ENCODE measurements at regions of chr5 and their contacts with region 1.

Region 1: GRCh38 chr5:63401436-63402046 is 560.7 kb downstream of the HTR1A start:
- DNase-seq: peak; percentile 45
- H3K4me3 ChIP-seq: no peak overlapping the region
- H3K27ac ChIP-seq: no peak overlapping the region
- H3K4me1 ChIP-seq: no peaks in the 10 kb centered on the region
- H3K27me3 ChIP-seq: no peaks in the 10 kb centered on the region
- CTCF ChIP-seq: peak; percentile 86 to 89

Region 2: GRCh38 chr5:62680121-62680520 is 721.4 kb before region 1 on chr5:
- CTCF ChIA-PET with region 1: no interaction called
- dilution Hi-C with region 1: no loop called
- in situ Hi-C with region 1: no loop called
- intact Hi-C with region 1: no loop called
- DNase-seq: no peak
- H3K4me3 ChIP-seq: no peak overlapping the region
- H3K27ac ChIP-seq: no peak overlapping the region
- H3K4me1 ChIP-seq: no peaks in the 10 kb centered on the region
- H3K27me3 ChIP-seq: no peaks in the 10 kb centered on the region
- CTCF ChIP-seq: no peak

Region 3: GRCh38 chr5:63085561-63085960 is 316.0 kb before region 1 on chr5:
- CTCF ChIA-PET with region 1: no interaction called
- dilution Hi-C with region 1: no loop called
- in situ Hi-C with region 1: no loop called
- intact Hi-C with region 1: no loop called
- DNase-seq: no peak
- H3K4me3 ChIP-seq: no peak overlapping the region
- H3K27ac ChIP-seq: no peak overlapping the region
- H3K4me1 ChIP-seq: no peaks in the 10 kb centered on the region
- H3K27me3 ChIP-seq: no peaks in the 10 kb centered on the region
- CTCF ChIP-seq: no peak

Region 4: GRCh38 chr5:63125862-63126261 is 275.7 kb before region 1 on chr5:
- CTCF ChIA-PET with region 1: interaction called, 3 read pairs
- dilution Hi-C with region 1: no loop called
- in situ Hi-C with region 1: loop called in 1 of 2 experiments (anchors 10 kb)
- intact Hi-C with region 1: loop called (anchors 2 kb)
- DNase-seq: peak; percentile 41
- H3K4me3 ChIP-seq: no peak overlapping the region
- H3K27ac ChIP-seq: no peak overlapping the region
- H3K4me1 ChIP-seq: peaks cover 16% of the 10 kb centered on the region
- H3K27me3 ChIP-seq: no peaks in the 10 kb centered on the region
- CTCF ChIP-seq: peak; percentile 61 to 68

Region 5: GRCh38 chr5:63228144-63228543 is 173.4 kb before region 1 on chr5:
- CTCF ChIA-PET with region 1: interaction called, 3 read pairs
- dilution Hi-C with region 1: no loop called
- in situ Hi-C with region 1: no loop called
- intact Hi-C with region 1: loop called (anchors 1 kb)
- DNase-seq: no peak
- H3K4me3 ChIP-seq: no peak overlapping the region
- H3K27ac ChIP-seq: no peak overlapping the region
- H3K4me1 ChIP-seq: no peaks in the 10 kb centered on the region
- H3K27me3 ChIP-seq: no peaks in the 10 kb centered on the region
- CTCF ChIP-seq: no peak

Region 6: GRCh38 chr5:63655043-63655442 is 253.5 kb after region 1 on chr5:
- CTCF ChIA-PET with region 1: no interaction called
- dilution Hi-C with region 1: no loop called
- in situ Hi-C with region 1: no loop called
- intact Hi-C with region 1: loop called (anchors 10 kb)
- DNase-seq: no peak
- H3K4me3 ChIP-seq: no peak overlapping the region
- H3K27ac ChIP-seq: no peak overlapping the region
- H3K4me1 ChIP-seq: no peaks in the 10 kb centered on the region
- H3K27me3 ChIP-seq: no peaks in the 10 kb centered on the region
- CTCF ChIP-seq: no peak

Region 7: GRCh38 chr5:63822614-63823013 is 421.1 kb after region 1 on chr5:
- CTCF ChIA-PET with region 1: no interaction called
- dilution Hi-C with region 1: no loop called
- in situ Hi-C with region 1: no loop called
- intact Hi-C with region 1: loop called (anchors 2 kb)
- DNase-seq: no peak
- H3K4me3 ChIP-seq: no peak overlapping the region
- H3K27ac ChIP-seq: no peak overlapping the region
- H3K4me1 ChIP-seq: no peaks in the 10 kb centered on the region
- H3K27me3 ChIP-seq: no peaks in the 10 kb centered on the region
- CTCF ChIP-seq: peak in 1 of 2 donors; percentile 35

Region 8: DNA sequence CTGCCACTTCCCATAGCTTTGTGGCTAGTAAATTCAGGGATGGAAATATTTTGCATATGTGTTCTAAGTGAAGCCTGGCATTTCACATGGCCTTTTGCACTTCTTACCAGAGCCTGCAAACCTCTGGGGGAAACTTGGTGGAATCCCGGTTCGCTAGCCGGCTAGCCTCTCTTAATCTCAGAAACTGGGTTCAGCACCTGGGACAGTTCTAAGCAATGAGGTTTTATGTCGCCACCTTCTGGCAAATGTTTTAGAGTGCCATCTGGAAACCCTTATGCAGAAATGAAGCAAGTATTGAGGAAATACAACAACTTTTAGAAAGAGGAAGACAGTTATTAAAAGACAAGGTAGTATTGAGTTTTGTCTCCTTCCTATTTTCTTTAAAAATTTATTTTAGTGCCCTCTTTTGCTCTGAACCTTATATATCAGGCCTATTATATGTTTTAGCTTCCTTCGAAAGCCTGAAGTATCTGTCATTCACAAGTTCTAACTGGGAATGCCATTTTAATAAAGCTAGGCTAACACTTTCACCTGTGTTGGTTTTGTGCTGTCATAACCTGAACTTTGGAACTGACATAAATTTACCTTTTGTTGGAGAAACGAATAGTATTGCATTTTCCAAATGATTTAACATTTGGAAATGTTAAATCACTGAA is 561.7 kb after region 1 on chr5:
- CTCF ChIA-PET with region 1: interaction called, 11 read pairs
- dilution Hi-C with region 1: no loop called
- in situ Hi-C with region 1: loop called (anchors 10 kb)
- intact Hi-C with region 1: loop called (anchors 1 kb)
- DNase-seq: peak; percentile 53
- H3K4me3 ChIP-seq: no peak overlapping the region
- H3K27ac ChIP-seq: no peak overlapping the region
- H3K4me1 ChIP-seq: no peaks in the 10 kb centered on the region
- H3K27me3 ChIP-seq: peaks cover 25% of the 10 kb centered on the region
- CTCF ChIP-seq: peak; percentile 70 to 88

Region 9: GRCh38 chr5:64147849-64148441 is 746.4 kb after region 1 on chr5:
- CTCF ChIA-PET with region 1: no interaction called
- dilution Hi-C with region 1: no loop called
- in situ Hi-C with region 1: no loop called
- intact Hi-C with region 1: loop called (anchors 5 kb)
- DNase-seq: peak; percentile 28
- H3K4me3 ChIP-seq: no peak overlapping the region
- H3K27ac ChIP-seq: no peak overlapping the region
- H3K4me1 ChIP-seq: peaks cover 10% of the 10 kb centered on the region
- H3K27me3 ChIP-seq: no peaks in the 10 kb centered on the region
- CTCF ChIP-seq: peak; percentile 77 to 84